Caco-2 (cell line): ENCODE measurements at regions of chr11 and their contacts with region 1.

Region 1: GRCh38 chr11:110565357-110566336 is 135.9 kb downstream of the FDX1 start:
- DNase-seq: peak; percentile 91 to 93
- H3K4me3 ChIP-seq: no peak overlapping the region
- H3K4me3 Mint-ChIP-seq: peak overlapping the region; percentile 28
- H3K27ac Mint-ChIP-seq: peak overlapping the region; percentile 25
- H3K4me1 ChIP-seq: peaks cover 20% of the 10 kb centered on the region
- H3K4me1 Mint-ChIP-seq: peaks cover 22% of the 10 kb centered on the region
- H3K27me3 ChIP-seq: no peaks in the 10 kb centered on the region; the same call in 1 of the 2 replicates
- H3K27me3 Mint-ChIP-seq: peaks cover 9% of the 10 kb centered on the region
- CTCF ChIP-seq: no peak

Region 2: DNA sequence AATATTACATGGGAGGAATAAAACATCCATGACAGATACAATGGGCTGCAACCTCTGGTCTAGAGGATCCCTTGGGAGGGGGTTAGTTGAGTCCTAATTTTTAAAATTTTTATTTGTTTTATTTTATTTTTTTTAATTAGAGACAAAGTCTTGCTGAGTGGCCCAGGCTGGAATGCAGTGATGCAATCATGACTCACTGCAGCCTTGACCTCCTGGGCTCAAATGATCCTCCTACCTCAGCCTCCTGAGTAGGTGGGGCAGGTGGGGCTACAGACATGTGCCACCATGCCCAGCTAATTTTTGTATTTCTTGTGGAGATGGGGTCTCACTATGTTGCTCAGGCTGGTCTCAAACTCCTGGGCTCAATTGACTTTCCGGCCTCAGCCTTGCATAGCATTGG is 92.8 kb before region 1 on chr11:
- CTCF ChIA-PET with region 1: no interaction called
- POLR2A ChIA-PET with region 1: no interaction called
- intact Hi-C with region 1: loop called (anchors 5 kb)
- DNase-seq: no peak
- H3K4me3 ChIP-seq: no peak overlapping the region
- H3K4me3 Mint-ChIP-seq: no peak overlapping the region
- H3K27ac Mint-ChIP-seq: no peak overlapping the region
- H3K4me1 ChIP-seq: no peaks in the 10 kb centered on the region
- H3K4me1 Mint-ChIP-seq: no peaks in the 10 kb centered on the region
- H3K27me3 ChIP-seq: no peaks in the 10 kb centered on the region
- H3K27me3 Mint-ChIP-seq: no peaks in the 10 kb centered on the region
- CTCF ChIP-seq: no peak

Region 3: GRCh38 chr11:110582728-110583432 is 17.2 kb after region 1 on chr11:
- CTCF ChIA-PET with region 1: interaction called, 10 read pairs
- POLR2A ChIA-PET with region 1: no interaction called
- intact Hi-C with region 1: loop called (anchors 1 kb)
- DNase-seq: peak in 1 of 2 experiments; percentile 45
- H3K4me3 ChIP-seq: no peak overlapping the region
- H3K4me3 Mint-ChIP-seq: no peak overlapping the region
- H3K27ac Mint-ChIP-seq: peak overlapping the region; percentile 30
- H3K4me1 ChIP-seq: peaks cover 21% of the 10 kb centered on the region
- H3K4me1 Mint-ChIP-seq: peaks cover 24% of the 10 kb centered on the region
- H3K27me3 ChIP-seq: no peaks in the 10 kb centered on the region
- H3K27me3 Mint-ChIP-seq: no peaks in the 10 kb centered on the region
- CTCF ChIP-seq: no peak

Region 4: GRCh38 chr11:110711776-110712658 is 146.4 kb after region 1 on chr11 and contains the start of gene ARHGAP20:
- CTCF ChIA-PET with region 1: no interaction called
- POLR2A ChIA-PET with region 1: no interaction called
- intact Hi-C with region 1: loop called (anchors 5 kb)
- DNase-seq: peak; percentile 56 to 78
- H3K4me3 ChIP-seq: peak within 1 kb of the TSS; percentile 40
- H3K4me3 Mint-ChIP-seq: peak within 1 kb of the TSS; percentile 70
- H3K27ac Mint-ChIP-seq: no peak within 1 kb of the TSS
- H3K4me1 ChIP-seq: peaks cover 19% of the 10 kb centered on the region
- H3K4me1 Mint-ChIP-seq: peaks cover 14% of the 10 kb centered on the region
- H3K27me3 ChIP-seq: peaks cover 12% of the 10 kb centered on the region
- H3K27me3 Mint-ChIP-seq: peaks cover 46% of the 10 kb centered on the region
- CTCF ChIP-seq: no peak
- total RNA-seq, gene ARHGAP20: 0.05 TPM in 1 of 2 replicates, not detected in the other